CD8-positive, alpha-beta memory T cell (primary cell): ENCODE measurements at regions of chr15 and their contacts with region 1.

Region 1: GRCh38 chr15:70466895-70467529 is 296.3 kb downstream of the UACA start:
- DNase-seq: peak in 3 of 5 donors; percentile 26 to 58 (median 36)
- H3K4me3 ChIP-seq: no peak overlapping the region
- H3K4me3 Mint-ChIP-seq: no peak overlapping the region
- H3K27ac ChIP-seq: no peak overlapping the region
- H3K27ac Mint-ChIP-seq: peak overlapping the region in 2 of 8 donors; percentile 2 to 58
- H3K4me1 ChIP-seq: peaks cover 6% of the 10 kb centered on the region
- H3K4me1 Mint-ChIP-seq: peaks cover 5 to 6% (median 5%) of the 10 kb centered on the region in 3 donors
- H3K27me3 ChIP-seq: peaks cover 5% of the 10 kb centered on the region
- H3K27me3 Mint-ChIP-seq: peaks cover 19 to 26% of the 10 kb centered on the region in 2 donors

Region 2: GRCh38 chr15:70170901-70171886 is 295.8 kb before region 1 on chr15:
- CTCF ChIA-PET with region 1: no interaction called
- POLR2A ChIA-PET with region 1: no interaction called
- DNase-seq: no peak
- H3K4me3 ChIP-seq: no peak overlapping the region
- H3K4me3 Mint-ChIP-seq: no peak overlapping the region
- H3K27ac ChIP-seq: no peak overlapping the region
- H3K27ac Mint-ChIP-seq: no peak overlapping the region
- H3K4me1 ChIP-seq: no peaks in the 10 kb centered on the region
- H3K4me1 Mint-ChIP-seq: no peaks in the 10 kb centered on the region
- H3K27me3 ChIP-seq: no peaks in the 10 kb centered on the region
- H3K27me3 Mint-ChIP-seq: no peaks in the 10 kb centered on the region

Region 3: DNA sequence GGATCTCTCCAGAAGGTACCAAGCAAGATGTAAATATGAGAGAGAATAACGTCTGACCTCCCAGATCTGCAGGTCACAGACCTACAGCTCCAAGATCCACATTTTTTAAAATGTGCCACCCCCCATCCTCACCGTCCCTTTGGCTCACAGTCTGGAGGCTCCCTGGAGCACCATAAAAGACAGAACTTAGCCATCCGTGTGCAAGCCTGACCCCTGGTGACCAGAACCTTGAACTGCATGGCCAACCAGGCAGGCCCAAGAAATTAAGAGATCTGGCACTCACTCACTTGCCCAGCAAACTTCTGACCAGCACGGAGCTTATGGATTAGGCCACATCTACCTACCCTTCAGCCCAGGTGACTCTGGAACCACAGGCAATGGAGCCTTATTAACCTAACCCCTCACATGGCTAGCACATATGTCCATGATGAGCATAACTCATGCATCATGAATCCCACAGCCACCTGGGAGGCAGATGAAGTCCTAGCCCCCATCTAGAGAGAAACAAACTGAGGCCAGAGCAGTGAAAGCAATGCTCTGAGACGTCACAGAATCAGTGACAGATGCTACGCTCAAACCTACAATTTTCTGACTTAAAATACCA is 21.1 kb after region 1 on chr15:
- CTCF ChIA-PET with region 1: interaction called, 34 read pairs
- POLR2A ChIA-PET with region 1: no interaction called
- DNase-seq: peak; percentile 55 to 80 (median 60)
- H3K4me3 ChIP-seq: no peak overlapping the region
- H3K4me3 Mint-ChIP-seq: peak overlapping the region in 1 of 7 donors; percentile 13
- H3K27ac ChIP-seq: no peak overlapping the region
- H3K27ac Mint-ChIP-seq: peak overlapping the region in 2 of 8 donors; percentile 11 to 68
- H3K4me1 ChIP-seq: peaks cover 66% of the 10 kb centered on the region
- H3K4me1 Mint-ChIP-seq: peaks cover 60 to 68% (median 63%) of the 10 kb centered on the region in 3 donors
- H3K27me3 ChIP-seq: no peaks in the 10 kb centered on the region
- H3K27me3 Mint-ChIP-seq: peaks cover 8 to 17% of the 10 kb centered on the region in 2 donors